Right ventricle myocardium inferior (tissue), 1 donor: ENCODE measurements at regions of chr19 and their contacts with region 1.

Region 1: DNA sequence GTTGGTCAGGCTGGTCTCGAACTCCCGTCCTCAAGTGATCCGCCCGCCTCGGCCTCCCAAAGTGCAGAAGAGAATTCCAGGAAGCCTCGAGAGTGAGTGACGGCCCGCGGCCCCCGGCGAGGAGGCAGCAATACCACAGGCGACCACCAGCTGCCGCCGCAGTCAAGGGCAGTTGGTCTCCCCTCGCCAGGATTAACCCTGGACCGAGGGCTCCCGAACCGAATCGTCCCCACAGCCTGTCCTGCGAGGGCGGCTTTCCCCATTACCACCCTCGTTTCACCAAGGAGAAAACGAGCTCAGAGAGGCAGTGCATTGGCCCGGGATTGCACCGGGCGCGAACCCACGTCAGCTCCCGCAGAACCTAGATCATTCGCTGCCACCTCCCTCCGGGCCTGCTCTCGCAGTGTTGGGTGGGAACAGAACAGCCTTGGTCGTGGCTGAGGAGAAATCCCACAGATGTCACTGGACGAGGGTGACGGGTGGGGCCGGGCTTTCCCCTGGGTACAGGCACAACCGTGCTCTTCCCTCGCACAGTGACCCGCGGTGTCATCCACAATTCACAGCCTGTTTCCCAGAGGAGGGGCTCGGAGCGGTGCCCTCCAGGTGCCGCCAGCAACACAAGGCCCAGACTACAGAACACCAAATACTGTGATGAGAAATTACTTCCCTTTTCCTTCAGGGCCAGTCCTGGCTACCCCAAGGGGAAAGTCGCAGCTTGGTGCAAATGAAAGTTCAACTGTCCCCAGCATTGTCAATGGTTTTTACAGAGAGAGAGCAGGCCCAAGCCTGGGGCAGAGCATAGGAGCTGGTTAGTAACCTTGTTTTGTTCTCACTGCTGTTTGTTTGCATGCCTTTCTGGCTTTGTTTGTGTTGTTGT is 24.8 kb downstream of the C2CD4C start:
- DNase-seq: no peak
- ATAC-seq: peak; percentile 52

Region 2: GRCh38 chr19:480016-480855 is 96.1 kb after region 1 on chr19:
- intact Hi-C with region 1: loop called (anchors 2 kb)
- DNase-seq: peak; percentile 90
- ATAC-seq: peak; percentile 95